Endothelial cell of umbilical vein (primary cell): ENCODE measurements at regions of chr12 and their contacts with region 1.

Region 1: DNA sequence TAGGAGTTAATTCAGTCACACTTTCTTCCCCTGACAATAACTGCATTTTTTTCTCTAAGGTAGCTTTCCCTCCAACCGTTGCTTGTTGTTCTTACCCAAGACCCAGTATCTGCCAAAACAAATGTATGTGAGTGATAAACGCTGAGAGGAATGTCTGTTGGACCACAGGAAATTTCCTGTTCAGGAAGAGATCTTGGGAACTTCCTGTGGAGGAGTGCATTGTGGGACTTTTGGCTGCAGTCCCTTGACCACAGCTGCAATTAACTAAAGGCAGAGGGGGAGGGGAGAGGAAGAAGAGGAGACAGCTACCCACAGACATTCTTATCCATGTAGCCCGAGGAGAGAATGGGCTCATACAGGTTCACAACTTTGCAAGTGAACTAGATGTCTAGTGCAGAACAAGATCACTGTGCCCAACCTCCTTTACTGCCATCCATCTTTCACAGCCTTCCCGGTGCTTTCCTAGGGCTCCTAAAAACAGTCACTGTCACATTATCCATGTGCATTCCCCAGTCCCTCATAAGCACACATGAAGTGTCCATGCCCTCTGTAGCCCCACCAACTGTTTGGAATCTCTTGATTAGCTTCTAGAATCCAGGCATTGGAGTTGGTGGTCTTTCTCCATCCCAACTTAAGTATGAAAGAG is 149.5 kb downstream of the ETV6 start:
- DNase-seq: peak; percentile 98
- H3K4me3 ChIP-seq: no peak overlapping the region
- H3K27ac ChIP-seq: peak overlapping the region; percentile 99
- H3K4me1 ChIP-seq: peaks cover 75% of the 10 kb centered on the region
- H3K27me3 ChIP-seq: no peaks in the 10 kb centered on the region
- CTCF ChIP-seq: no peak
- POLR2A ChIP-seq: peak; percentile 84

Region 2: DNA sequence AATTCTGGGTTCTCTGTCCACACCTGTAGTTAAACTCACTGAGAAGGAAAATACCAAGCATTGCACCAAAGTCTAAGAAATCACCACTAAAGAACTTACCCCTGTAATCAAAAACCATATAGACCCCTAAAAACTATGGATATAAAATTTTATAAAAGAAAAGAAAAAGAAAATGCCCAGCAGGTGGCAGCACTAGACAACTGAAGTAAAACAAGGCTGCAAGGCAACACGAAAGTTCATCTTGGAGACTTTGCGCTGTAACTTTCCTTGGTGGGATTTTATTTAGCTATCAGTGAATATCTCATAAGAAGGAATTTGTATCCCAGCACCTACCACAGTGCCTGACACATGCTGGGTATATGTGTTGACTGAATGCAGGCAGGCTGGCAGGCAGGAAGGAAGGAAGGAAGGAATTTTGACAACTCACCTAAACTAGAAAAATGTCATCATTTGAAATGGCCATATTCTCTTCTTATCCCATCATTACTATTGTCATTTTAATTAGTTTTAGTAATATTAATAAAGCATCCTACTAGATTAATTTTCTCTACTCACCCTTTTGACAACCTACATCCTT is 217.7 kb before region 1 on chr12:
- CTCF ChIA-PET with region 1: interaction called, 10 read pairs
- POLR2A ChIA-PET with region 1: no interaction called
- dilution Hi-C with region 1: no loop called
- intact Hi-C with region 1: loop called (anchors 1 kb)
- DNase-seq: peak; percentile 65
- H3K4me3 ChIP-seq: no peak overlapping the region
- H3K27ac ChIP-seq: no peak overlapping the region
- H3K4me1 ChIP-seq: peaks cover 8% of the 10 kb centered on the region
- H3K27me3 ChIP-seq: no peaks in the 10 kb centered on the region
- CTCF ChIP-seq: peak in 1 of 2 donors; percentile 16
- POLR2A ChIP-seq: no peak

Region 3: DNA sequence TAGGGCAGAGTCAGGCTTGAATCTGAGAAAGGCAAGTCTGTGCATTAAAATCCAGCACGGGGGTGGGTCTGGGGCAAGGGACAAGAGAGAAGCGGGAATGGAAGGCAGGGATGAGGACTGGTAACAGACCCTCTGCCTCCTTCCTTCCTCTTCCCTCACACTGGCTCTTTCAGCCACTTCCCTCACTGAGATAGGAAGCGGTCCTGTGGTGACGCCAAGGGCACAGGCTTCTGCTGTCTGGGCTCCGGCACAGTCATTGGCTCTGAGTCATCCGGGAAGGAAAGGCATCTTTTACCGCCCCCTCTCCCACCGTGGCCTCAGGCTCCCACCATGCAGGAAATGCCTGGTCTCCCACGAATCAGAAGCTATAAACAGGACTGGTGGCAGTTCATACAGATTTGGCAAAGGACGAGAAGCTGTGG is 79.3 kb before region 1 on chr12:
- CTCF ChIA-PET with region 1: no interaction called
- POLR2A ChIA-PET with region 1: no interaction called
- dilution Hi-C with region 1: no loop called
- intact Hi-C with region 1: loop called (anchors 1 kb)
- DNase-seq: peak; percentile 94
- H3K4me3 ChIP-seq: no peak overlapping the region
- H3K27ac ChIP-seq: peak overlapping the region; percentile 95
- H3K4me1 ChIP-seq: peaks cover 60% of the 10 kb centered on the region
- H3K27me3 ChIP-seq: no peaks in the 10 kb centered on the region
- CTCF ChIP-seq: no peak
- POLR2A ChIP-seq: peak; percentile 21

Region 4: GRCh38 chr12:11746024-11746771 is 52.8 kb before region 1 on chr12:
- CTCF ChIA-PET with region 1: interaction called, 4 read pairs
- POLR2A ChIA-PET with region 1: interaction called, 3 read pairs
- dilution Hi-C with region 1: no loop called
- intact Hi-C with region 1: loop called (anchors 1 kb)
- DNase-seq: peak; percentile 92
- H3K4me3 ChIP-seq: no peak overlapping the region
- H3K27ac ChIP-seq: peak overlapping the region; percentile 74
- H3K4me1 ChIP-seq: peaks cover 34% of the 10 kb centered on the region
- H3K27me3 ChIP-seq: no peaks in the 10 kb centered on the region
- CTCF ChIP-seq: no peak
- POLR2A ChIP-seq: peak; percentile 58

Region 5: GRCh38 chr12:11812586-11813427 is 13.8 kb after region 1 on chr12:
- CTCF ChIA-PET with region 1: interaction called, 46 read pairs
- POLR2A ChIA-PET with region 1: interaction called, 3 read pairs
- dilution Hi-C with region 1: no loop called
- intact Hi-C with region 1: loop called (anchors 1 kb)
- DNase-seq: peak; percentile 59
- H3K4me3 ChIP-seq: peak overlapping the region in 1 of 3 experiments; percentile 29
- H3K27ac ChIP-seq: peak overlapping the region; percentile 77
- H3K4me1 ChIP-seq: peaks cover 35% of the 10 kb centered on the region
- H3K27me3 ChIP-seq: no peaks in the 10 kb centered on the region
- CTCF ChIP-seq: peak in 1 of 2 donors; percentile 40
- POLR2A ChIP-seq: peak; percentile 46

Region 6: GRCh38 chr12:11862798-11863197 is 63.8 kb after region 1 on chr12:
- CTCF ChIA-PET with region 1: no interaction called
- POLR2A ChIA-PET with region 1: no interaction called
- dilution Hi-C with region 1: no loop called
- intact Hi-C with region 1: loop called (anchors 1 kb)
- DNase-seq: peak; percentile 69
- H3K4me3 ChIP-seq: no peak overlapping the region
- H3K27ac ChIP-seq: peak overlapping the region; percentile 98
- H3K4me1 ChIP-seq: peaks cover 42% of the 10 kb centered on the region
- H3K27me3 ChIP-seq: no peaks in the 10 kb centered on the region
- CTCF ChIP-seq: no peak
- POLR2A ChIP-seq: no peak